ENCODE measurements at regions of chr14 and their contacts with region 1.

Region 1: GRCh38 chr14:24911324-24912109 is 138.4 kb downstream of the STXBP6 start:
- DNase-seq: no peak
- ATAC-seq: peak; percentile 15 to 64 (median 52)
- H3K4me3 ChIP-seq: peak overlapping the region in 2 of 12 donors; percentile 3 to 4
- H3K27ac ChIP-seq: peak overlapping the region in 3 of 12 donors; percentile 8 to 48 (median 15)
- H3K4me1 ChIP-seq: peaks cover 0 to 66% (median 18%) of the 10 kb centered on the region in 12 donors
- H3K27me3 ChIP-seq: no peaks in the 10 kb centered on the region
- CTCF ChIP-seq: no peak
- POLR2A ChIP-seq: no peak

Region 2: DNA sequence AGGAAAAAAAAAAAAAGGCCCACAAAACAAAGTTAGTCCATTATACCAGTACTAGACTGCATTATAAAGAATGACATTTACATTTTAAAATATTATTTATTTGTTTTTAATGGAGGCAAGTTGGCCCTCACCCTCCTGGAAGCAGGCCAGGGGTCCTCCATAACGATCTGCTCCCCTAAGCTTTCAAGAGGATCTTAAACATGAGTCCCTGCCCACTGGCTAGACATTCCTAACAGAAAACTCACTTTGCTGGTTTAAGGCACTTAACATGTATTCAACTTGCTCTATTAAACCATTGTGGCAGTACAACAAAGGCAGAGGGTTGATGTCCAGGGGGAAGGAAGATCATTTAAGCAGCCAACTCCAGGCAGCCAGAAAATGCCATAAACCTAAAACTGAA is 27.1 kb after region 1 on chr14:
- intact Hi-C with region 1: loop called in 1 of 10 experiments (anchors 1 kb)
- DNase-seq: no peak
- ATAC-seq: no peak
- H3K4me3 ChIP-seq: no peak overlapping the region
- H3K27ac ChIP-seq: peak overlapping the region in 2 of 12 donors; percentile 11 to 20
- H3K4me1 ChIP-seq: peaks cover 0 to 68% (median 7%) of the 10 kb centered on the region in 12 donors
- H3K27me3 ChIP-seq: no peaks in the 10 kb centered on the region
- CTCF ChIP-seq: no peak
- POLR2A ChIP-seq: no peak

Region 3: GRCh38 chr14:25444381-25444780 is 532.9 kb after region 1 on chr14:
- intact Hi-C with region 1: no loop called
- DNase-seq: no peak
- ATAC-seq: no peak
- H3K4me3 ChIP-seq: no peak overlapping the region
- H3K27ac ChIP-seq: no peak overlapping the region
- H3K4me1 ChIP-seq: no peaks in the 10 kb centered on the region
- H3K27me3 ChIP-seq: no peaks in the 10 kb centered on the region
- CTCF ChIP-seq: no peak
- POLR2A ChIP-seq: no peak